A673 (cell line): ENCODE measurements at regions of chr10 and their contacts with region 1.

Region 1: GRCh38 chr10:49512121-49512809 is 26.7 kb downstream of the ERCC6 start:
- DNase-seq: peak; percentile 55
- H3K4me3 ChIP-seq: no peak overlapping the region
- H3K27ac ChIP-seq: no peak overlapping the region
- H3K4me1 ChIP-seq: no peaks in the 10 kb centered on the region
- H3K27me3 ChIP-seq: no peaks in the 10 kb centered on the region
- CTCF ChIP-seq: peak; percentile 74

Region 2: DNA sequence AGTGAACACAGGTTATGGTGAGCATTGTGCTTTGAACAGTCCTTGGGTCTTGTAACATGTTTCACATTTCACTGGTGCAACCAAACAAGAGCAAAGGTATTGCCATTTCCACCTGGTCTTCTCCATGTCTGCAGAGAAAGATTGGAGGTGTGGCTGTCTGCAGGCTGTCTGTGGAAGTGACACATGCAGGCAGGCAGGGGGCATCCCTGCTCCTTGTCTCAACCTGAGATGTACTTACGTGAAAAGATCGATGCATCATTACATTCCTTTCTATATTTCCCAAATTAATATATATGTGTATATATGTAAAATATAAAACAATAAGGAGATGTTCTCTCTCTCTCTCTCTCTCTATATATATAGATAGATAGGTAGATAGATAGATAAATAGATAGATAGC is 626.9 kb before region 1 on chr10:
- CTCF ChIA-PET with region 1: no interaction called
- POLR2A ChIA-PET with region 1: no interaction called
- intact Hi-C with region 1: loop called (anchors 5 kb)
- DNase-seq: no peak
- H3K4me3 ChIP-seq: no peak overlapping the region
- H3K27ac ChIP-seq: no peak overlapping the region
- H3K4me1 ChIP-seq: no peaks in the 10 kb centered on the region
- H3K27me3 ChIP-seq: no peaks in the 10 kb centered on the region
- CTCF ChIP-seq: peak; percentile 39; the same call in 1 of the 2 replicates